ENCODE measurements at regions of chr3 and their contacts with region 1.

Region 1: DNA sequence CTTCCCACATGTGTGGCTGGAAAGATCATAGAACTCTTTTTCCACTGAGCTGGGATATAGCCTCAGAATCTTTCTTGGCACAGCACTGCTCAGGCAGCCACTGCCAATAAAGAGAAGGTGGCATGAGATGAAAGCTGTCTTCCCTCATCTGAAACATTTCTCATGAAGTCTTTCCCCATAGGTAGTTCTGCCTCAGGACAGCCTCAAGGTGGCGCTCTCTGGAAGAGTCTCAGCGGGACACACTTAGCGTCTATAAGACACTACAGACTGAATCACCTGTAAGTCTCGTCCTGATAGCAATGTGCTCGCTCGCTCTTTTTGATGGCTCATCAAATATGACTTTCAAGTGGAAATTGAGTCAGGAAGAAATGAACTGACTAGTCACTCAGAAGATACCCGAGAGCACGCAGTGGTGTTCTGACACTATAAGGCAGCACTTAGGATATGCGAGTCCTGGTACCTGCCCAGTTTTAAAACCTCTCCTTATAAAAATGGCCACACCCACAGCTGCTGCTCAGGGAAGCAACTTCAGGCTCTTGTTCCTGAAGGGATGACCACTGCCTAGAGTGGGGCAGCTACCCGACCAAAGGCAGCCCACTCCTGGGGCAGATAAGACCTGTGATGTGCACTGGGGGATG is 269.5 kb downstream of the SUCLG2 start:
- DNase-seq: peak in 7 of 9 experiments; percentile 4 to 54 (median 38)
- ATAC-seq: no peak
- H3K4me3 ChIP-seq: no peak overlapping the region
- H3K4me3 Mint-ChIP-seq: no peak overlapping the region
- H3K27ac ChIP-seq: no peak overlapping the region
- H3K27ac Mint-ChIP-seq: peak overlapping the region; percentile 18
- H3K4me1 ChIP-seq: no peaks in the 10 kb centered on the region
- H3K4me1 Mint-ChIP-seq: peaks cover 12% of the 10 kb centered on the region
- H3K27me3 ChIP-seq: no peaks in the 10 kb centered on the region
- H3K27me3 Mint-ChIP-seq: no peaks in the 10 kb centered on the region
- CTCF ChIP-seq: peak; percentile 45

Region 2: DNA sequence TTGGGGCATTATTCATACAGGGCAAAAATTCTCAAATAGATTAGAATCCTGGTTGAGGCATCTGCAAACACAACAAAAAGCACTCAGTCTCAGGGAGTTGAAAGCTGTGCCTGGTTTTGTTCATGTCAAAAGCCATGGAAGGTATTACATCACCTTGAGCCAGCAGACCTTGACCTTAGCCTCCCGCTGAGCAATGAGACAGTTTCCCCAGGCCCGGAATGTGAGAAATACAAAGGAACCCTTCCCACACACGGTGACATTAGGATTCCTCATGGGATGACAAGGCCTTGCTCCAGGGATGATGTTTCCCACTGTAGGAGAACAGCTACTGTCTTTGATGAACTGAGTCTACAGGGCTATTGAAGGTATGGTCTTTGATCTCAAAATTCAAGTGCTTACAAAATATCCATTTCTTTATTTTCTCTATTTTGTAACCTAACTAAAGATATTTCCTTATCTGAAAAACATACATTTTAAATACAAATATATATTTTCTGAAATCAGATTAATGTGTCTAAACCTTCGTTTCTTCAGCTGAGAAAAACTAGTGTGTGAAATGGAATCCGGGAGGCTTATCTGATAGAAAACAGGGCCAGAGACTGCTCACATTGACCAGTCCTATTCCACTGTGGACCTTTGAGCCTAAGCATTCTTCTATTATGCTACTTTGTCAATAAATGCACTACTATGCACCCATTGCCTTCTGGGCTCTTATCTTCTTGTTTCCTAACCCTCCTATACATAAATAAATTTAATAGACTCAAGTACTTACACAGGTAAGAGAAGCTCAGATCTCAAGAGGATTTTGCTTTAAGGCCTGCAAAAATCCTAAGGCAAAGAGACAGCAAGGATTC is 88.6 kb before region 1 on chr3:
- CTCF ChIA-PET with region 1: no interaction called
- POLR2A ChIA-PET with region 1: no interaction called
- intact Hi-C with region 1: no loop called
- DNase-seq: no peak
- ATAC-seq: no peak
- H3K4me3 ChIP-seq: no peak overlapping the region
- H3K4me3 Mint-ChIP-seq: no peak overlapping the region
- H3K27ac ChIP-seq: no peak overlapping the region
- H3K27ac Mint-ChIP-seq: no peak overlapping the region
- H3K4me1 ChIP-seq: no peaks in the 10 kb centered on the region
- H3K4me1 Mint-ChIP-seq: no peaks in the 10 kb centered on the region
- H3K27me3 ChIP-seq: no peaks in the 10 kb centered on the region
- H3K27me3 Mint-ChIP-seq: no peaks in the 10 kb centered on the region
- CTCF ChIP-seq: no peak

Region 3: GRCh38 chr3:67617518-67617917 is 232.6 kb after region 1 on chr3:
- CTCF ChIA-PET with region 1: no interaction called
- POLR2A ChIA-PET with region 1: no interaction called
- intact Hi-C with region 1: no loop called
- DNase-seq: no peak
- ATAC-seq: no peak
- H3K4me3 ChIP-seq: no peak overlapping the region
- H3K4me3 Mint-ChIP-seq: no peak overlapping the region
- H3K27ac ChIP-seq: no peak overlapping the region
- H3K27ac Mint-ChIP-seq: no peak overlapping the region
- H3K4me1 ChIP-seq: no peaks in the 10 kb centered on the region
- H3K4me1 Mint-ChIP-seq: peaks cover 53% of the 10 kb centered on the region
- H3K27me3 ChIP-seq: no peaks in the 10 kb centered on the region
- H3K27me3 Mint-ChIP-seq: no peaks in the 10 kb centered on the region
- CTCF ChIP-seq: no peak

Region 4: DNA sequence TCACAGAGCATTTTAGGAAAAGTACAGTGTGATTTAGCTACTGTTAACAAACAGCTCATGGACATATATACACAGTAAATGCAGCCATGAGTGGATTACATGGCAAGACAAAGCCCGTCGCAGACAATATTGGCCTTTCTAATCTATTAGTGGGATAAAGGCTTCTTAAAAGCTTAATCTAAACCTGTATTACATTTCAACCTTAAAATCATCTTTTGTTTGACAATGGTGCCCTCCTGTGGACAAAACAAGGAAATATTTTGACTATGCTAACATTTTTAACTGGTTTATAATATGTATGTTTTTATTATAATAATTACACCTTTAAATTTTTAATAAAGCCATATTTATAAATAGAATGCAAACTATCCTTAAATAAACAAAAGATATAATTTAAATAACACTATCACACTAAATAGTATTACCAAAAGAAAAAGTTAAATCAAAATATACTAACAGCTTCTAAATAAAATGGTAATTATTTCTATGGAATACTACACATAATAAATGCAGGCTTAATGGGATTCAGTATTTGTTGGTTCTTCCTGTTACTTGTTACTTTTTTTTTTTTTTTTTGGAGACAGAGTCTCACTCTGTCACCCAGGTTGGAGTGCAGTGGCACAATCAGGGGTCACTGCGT is 1508.8 kb after region 1 on chr3:
- CTCF ChIA-PET with region 1: no interaction called
- POLR2A ChIA-PET with region 1: no interaction called
- intact Hi-C with region 1: loop called (anchors 5 kb)
- DNase-seq: peak in 3 of 9 experiments; percentile 16 to 56 (median 47)
- ATAC-seq: no peak
- H3K4me3 ChIP-seq: no peak overlapping the region
- H3K4me3 Mint-ChIP-seq: no peak overlapping the region
- H3K27ac ChIP-seq: no peak overlapping the region
- H3K27ac Mint-ChIP-seq: no peak overlapping the region
- H3K4me1 ChIP-seq: no peaks in the 10 kb centered on the region
- H3K4me1 Mint-ChIP-seq: no peaks in the 10 kb centered on the region
- H3K27me3 ChIP-seq: no peaks in the 10 kb centered on the region
- H3K27me3 Mint-ChIP-seq: no peaks in the 10 kb centered on the region
- CTCF ChIP-seq: peak; percentile 66

Measured in CD8-positive, alpha-beta T cell (primary cell).